Thyroid gland (tissue), 4 donors: ENCODE measurements at regions of chr1 and their contacts with region 1.

Region 1: DNA sequence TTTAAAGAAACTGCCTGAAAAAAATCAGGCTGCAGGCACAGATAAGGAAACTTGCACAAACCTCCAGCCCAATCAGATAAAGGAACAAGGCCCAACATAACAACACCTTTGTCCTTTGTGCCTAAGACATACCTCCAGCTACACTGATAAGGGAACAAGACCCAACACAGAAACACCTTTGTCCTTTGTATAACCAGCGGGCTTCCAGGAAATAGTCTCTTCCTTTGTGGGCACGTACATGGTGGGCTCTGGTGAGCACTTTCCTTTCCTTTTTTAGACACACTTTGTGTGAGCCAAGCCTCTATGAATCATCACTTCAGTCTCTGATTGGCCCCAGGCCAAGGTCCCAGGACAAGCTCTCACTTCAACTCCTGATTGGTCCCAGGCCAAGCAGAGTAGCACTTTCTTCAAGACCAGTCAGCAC is 23.6 kb downstream of the ZNF670 start:
- DNase-seq: no peak
- H3K4me3 ChIP-seq: no peak overlapping the region
- H3K27ac ChIP-seq: no peak overlapping the region
- H3K4me1 ChIP-seq: no peaks in the 10 kb centered on the region
- H3K27me3 ChIP-seq: no peaks in the 10 kb centered on the region
- CTCF ChIP-seq: no peak
- POLR2A ChIP-seq: no peak

Region 2: GRCh38 chr1:246969621-246970020 is 85.4 kb before region 1 on chr1:
- intact Hi-C with region 1: no loop called
- DNase-seq: no peak
- H3K4me3 ChIP-seq: no peak overlapping the region
- H3K27ac ChIP-seq: no peak overlapping the region
- H3K4me1 ChIP-seq: no peaks in the 10 kb centered on the region
- H3K27me3 ChIP-seq: no peaks in the 10 kb centered on the region
- CTCF ChIP-seq: no peak
- POLR2A ChIP-seq: no peak

Region 3: GRCh38 chr1:246989901-246990300 is 65.1 kb before region 1 on chr1:
- intact Hi-C with region 1: loop called (anchors 10 kb)
- DNase-seq: no peak
- H3K4me3 ChIP-seq: no peak overlapping the region
- H3K27ac ChIP-seq: no peak overlapping the region
- H3K4me1 ChIP-seq: no peaks in the 10 kb centered on the region
- H3K27me3 ChIP-seq: no peaks in the 10 kb centered on the region
- CTCF ChIP-seq: no peak
- POLR2A ChIP-seq: no peak

Region 4: GRCh38 chr1:247146671-247147070 is 91.7 kb after region 1 on chr1:
- intact Hi-C with region 1: loop called (anchors 10 kb)
- DNase-seq: no peak
- H3K4me3 ChIP-seq: no peak overlapping the region
- H3K27ac ChIP-seq: no peak overlapping the region
- H3K4me1 ChIP-seq: no peaks in the 10 kb centered on the region
- H3K27me3 ChIP-seq: no peaks in the 10 kb centered on the region
- CTCF ChIP-seq: no peak
- POLR2A ChIP-seq: no peak